HEK293 (cell line): ENCODE measurements at regions of chr5 and their contacts with region 1.

Region 1: GRCh38 chr5:112551419-112552032 is 132.4 kb upstream of the EPB41L4A start:
- H3K4me3 ChIP-seq: no peak overlapping the region
- H3K27ac ChIP-seq: no peak overlapping the region
- H3K4me1 ChIP-seq: no peaks in the 10 kb centered on the region
- CTCF ChIP-seq: no peak; the same call in 1 of the 2 replicates

Region 2: GRCh38 chr5:112529525-112529924 is 22.0 kb before region 1 on chr5:
- CTCF ChIA-PET with region 1: interaction called, 10 read pairs
- POLR2A ChIA-PET with region 1: no interaction called
- H3K4me3 ChIP-seq: no peak overlapping the region
- H3K27ac ChIP-seq: no peak overlapping the region
- H3K4me1 ChIP-seq: no peaks in the 10 kb centered on the region
- CTCF ChIP-seq: no peak

Region 3: GRCh38 chr5:112604732-112605630 is 53.5 kb after region 1 on chr5:
- CTCF ChIA-PET with region 1: interaction called, 10 read pairs
- POLR2A ChIA-PET with region 1: no interaction called
- H3K4me3 ChIP-seq: no peak overlapping the region
- H3K27ac ChIP-seq: no peak overlapping the region
- H3K4me1 ChIP-seq: no peaks in the 10 kb centered on the region
- CTCF ChIP-seq: 0 out of 2 replicates have a peak, but pooled peaks have one; percentile 15

Region 4: DNA sequence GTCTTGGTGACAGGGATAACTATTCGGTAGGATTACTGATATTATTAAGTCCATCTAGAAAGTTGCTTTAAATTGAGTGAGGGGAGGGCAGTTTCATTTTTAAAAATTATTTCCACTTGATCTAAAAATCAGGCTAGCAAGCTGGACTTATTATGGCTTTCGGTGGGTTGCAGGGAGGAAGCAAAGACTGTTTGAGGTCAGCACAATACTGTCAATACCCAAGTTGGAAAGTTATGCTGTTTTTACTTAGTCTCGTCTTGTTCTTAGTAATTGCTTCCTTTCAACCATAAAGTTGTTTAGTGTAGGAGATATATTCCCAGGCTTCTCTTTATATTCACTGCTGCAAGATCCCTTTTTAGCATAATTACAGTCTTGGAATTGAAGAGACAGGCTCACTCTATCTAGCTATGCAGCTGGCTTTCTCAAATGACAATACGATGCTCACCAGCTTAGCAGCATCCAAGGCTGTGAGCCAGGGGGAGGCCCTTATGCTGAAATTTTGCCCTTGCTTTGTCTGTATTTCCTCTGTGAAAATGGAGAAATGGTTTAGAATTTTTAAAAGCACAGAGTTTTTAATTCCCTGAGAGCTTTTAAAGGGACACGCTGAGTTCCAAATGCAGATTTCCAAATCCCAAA is 117.9 kb after region 1 on chr5:
- CTCF ChIA-PET with region 1: no interaction called
- POLR2A ChIA-PET with region 1: no interaction called
- H3K4me3 ChIP-seq: no peak overlapping the region
- H3K27ac ChIP-seq: no peak overlapping the region
- H3K4me1 ChIP-seq: no peaks in the 10 kb centered on the region
- CTCF ChIP-seq: no peak

Region 5: DNA sequence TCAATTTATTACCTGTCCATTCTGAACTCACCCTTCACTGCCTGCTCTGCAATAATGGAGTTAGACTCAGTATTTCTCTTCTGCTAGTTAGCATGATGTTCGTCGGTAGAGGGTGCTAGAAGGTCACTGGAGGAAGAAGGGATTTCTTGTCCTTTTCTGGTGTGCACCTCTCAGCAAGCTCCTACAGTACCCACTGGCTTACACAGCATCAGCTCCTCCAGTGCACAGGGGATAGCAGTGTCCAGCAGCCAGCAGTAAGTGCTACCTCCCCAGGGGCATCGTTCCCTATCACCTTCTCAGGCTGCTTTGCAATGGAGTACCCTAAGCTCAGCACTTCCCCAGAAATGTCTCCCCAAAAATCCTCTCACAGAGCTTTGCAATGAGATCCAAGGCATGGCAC is 140.2 kb after region 1 on chr5:
- CTCF ChIA-PET with region 1: interaction called, 56 read pairs
- POLR2A ChIA-PET with region 1: no interaction called
- H3K4me3 ChIP-seq: no peak overlapping the region
- H3K27ac ChIP-seq: no peak overlapping the region
- H3K4me1 ChIP-seq: no peaks in the 10 kb centered on the region
- CTCF ChIP-seq: peak; percentile 47